ENCODE measurements at regions of chr2 and their contacts with region 1.

Region 1: DNA sequence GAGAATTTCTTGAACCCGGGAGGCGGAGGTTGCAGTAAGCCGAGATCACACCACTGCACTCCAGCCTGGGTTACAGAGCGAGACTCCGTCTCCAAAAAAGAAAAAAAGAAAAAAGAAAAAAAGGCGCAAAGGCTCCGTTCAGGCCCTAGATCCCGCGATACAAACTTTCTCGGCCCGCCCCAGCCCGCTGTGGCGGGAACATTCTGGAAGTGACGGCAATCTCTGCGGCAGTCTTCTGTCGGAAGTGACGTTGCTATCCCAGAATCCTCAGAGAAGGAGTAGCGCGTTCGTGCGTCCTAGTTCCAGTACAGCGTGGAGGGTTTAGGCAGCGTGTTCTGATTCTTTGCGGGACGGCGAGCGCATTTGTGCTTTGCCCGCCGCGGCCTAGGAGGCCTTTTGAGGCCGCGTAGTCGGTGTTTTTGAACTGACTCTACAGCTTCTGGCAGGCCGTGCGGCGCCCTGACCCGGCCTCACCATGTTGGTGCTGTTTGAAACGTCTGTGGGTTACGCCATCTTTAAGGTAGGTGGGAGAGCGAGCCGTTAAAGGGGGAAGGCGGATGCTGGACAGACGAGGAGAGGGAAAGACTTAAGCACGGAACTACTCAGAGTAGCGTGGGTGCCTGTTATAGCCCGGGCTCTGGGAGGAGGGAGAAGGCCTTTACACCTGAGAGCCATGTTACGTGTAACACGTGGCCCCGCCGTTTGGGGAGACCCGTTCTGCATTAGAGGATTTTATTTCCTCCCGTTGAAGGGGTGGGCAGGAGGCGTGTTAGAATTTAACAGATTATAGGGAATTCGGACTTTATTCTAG is at the start of gene NOP58:
- DNase-seq: peak; percentile 85 to 98 (median 92)

Region 2: GRCh38 chr2:202238234-202239197 is 27.2 kb before region 1 on chr2 and contains the start of gene SUMO1:
- intact Hi-C with region 1: loop called (anchors 2 kb)
- DNase-seq: peak; percentile 85 to 99 (median 94)

Region 3: DNA sequence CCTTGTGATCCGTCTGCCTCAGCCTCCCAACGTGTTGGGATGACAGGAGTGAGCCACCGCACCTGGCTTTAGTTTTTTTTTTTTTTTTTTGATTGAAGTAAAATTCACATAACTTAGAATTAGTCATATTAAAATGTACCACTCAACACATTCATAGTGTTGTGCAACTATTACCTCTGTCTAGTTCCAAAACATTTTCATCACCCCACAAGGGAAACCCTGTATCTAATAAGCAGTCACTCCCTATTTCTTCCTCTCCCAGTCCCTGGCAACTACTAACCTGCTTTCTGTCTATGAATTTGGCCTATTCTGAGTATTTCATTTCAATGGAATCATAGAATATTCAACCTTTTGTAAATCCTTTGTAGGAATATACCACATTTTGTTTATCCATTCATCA is 245.2 kb after region 1 on chr2:
- intact Hi-C with region 1: no loop called
- DNase-seq: no peak

Measured in posterior cingulate gyrus (tissue), 11 donors.